GM23248 (cell line): ENCODE measurements at regions of chr2 and their contacts with region 1.

Region 1: DNA sequence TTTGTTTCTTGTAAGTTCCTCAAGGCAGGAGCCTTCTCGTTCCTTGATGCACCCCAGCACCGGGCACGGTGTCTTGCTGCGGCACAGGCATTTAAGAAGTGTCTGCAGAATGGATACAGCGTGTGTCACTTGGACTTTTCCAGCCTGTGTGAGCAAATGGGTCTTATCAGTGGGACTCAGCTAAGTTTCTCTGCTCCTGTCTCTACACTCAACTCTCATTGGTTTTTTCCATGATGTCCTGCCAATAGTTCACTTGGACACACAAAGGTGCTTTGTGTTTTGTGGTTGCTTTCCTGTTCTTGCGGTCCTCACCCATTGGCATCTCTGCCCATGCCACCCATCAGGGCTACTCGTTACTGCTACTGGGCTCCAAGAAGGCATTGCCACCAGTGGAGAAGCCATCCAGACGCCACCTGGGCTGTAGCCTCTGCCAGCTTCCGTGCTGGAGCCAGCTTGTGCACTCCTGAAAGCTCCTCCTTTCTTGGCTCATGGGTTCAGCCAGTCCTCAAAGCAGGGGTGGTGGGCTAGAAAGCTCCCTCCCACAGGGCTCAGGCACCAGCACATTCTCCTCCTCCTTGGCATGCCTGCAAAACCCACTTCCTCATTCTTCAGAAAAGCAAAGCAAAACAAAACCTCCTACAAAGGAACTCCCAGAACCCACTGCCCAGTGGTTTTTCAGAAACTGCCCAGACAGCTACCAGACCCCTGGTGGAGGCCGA is 41.4 kb downstream of the IL1R2 start:
- DNase-seq: peak; percentile 53
- H3K4me3 ChIP-seq: no peak overlapping the region
- H3K27ac ChIP-seq: peak overlapping the region; percentile 67
- H3K4me1 ChIP-seq: peaks cover 47% of the 10 kb centered on the region
- H3K27me3 ChIP-seq: no peaks in the 10 kb centered on the region

Region 2: GRCh38 chr2:102141970-102142828 is 109.0 kb after region 1 on chr2 and contains the start of gene IL1R1:
- in situ Hi-C with region 1: loop called (anchors 25 kb)
- DNase-seq: peak; percentile 97
- H3K4me3 ChIP-seq: peak within 1 kb of the TSS; percentile 86
- H3K27ac ChIP-seq: peak within 1 kb of the TSS; percentile 97
- H3K4me1 ChIP-seq: peaks cover 33% of the 10 kb centered on the region
- H3K27me3 ChIP-seq: no peaks in the 10 kb centered on the region
- total RNA-seq, gene IL1R1: 87.9 and 93.5 TPM in 2 replicates